ENCODE measurements at regions of chr10 and their contacts with region 1.

Region 1: GRCh38 chr10:43348511-43349312 is 22.7 kb upstream of the FXYD4 start:
- DNase-seq: peak; percentile 69
- H3K4me3 ChIP-seq: no peak overlapping the region
- H3K27ac ChIP-seq: no peak overlapping the region
- H3K4me1 ChIP-seq: peaks cover 5% of the 10 kb centered on the region
- H3K27me3 ChIP-seq: no peaks in the 10 kb centered on the region
- CTCF ChIP-seq: peak; percentile 98 to 99

Region 2: DNA sequence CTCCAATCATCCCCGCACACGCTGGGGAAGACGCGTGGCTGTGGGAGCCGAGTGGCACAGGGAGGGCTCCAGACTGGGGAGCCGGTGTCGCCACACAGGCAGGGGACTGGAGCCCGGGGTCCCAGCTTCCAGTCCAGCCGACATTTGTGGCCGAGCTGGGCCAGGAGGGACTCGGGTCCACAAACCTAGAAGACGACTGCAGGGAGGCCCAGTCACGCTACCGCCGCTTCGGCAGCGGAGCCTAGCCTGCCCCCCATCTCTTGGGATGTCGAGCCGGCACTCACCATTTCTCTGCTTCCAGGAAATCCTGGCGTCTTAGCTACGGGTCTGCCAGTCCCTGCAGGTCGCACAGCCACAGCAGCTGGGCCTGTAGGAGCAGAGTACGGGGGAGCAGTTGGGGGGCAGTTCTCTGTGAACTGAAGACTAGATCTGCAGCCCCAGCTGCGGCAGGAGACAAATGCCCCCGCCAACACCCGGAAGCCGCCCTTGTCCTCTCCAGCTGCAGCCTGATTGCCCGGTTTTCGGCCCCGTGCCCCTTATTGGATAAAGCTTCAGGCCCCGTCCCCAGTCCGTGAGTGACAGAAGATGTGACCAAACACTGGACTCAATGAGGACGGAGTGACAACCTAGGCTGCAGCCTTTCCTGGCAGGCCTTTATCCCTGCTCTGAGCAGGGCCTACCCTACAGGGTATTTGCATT is 981.0 kb before region 1 on chr10:
- CTCF ChIA-PET with region 1: no interaction called
- dilution Hi-C with region 1: no loop called
- in situ Hi-C with region 1: no loop called
- intact Hi-C with region 1: no loop called
- DNase-seq: peak; percentile 94
- H3K4me3 ChIP-seq: peak overlapping the region; percentile 70
- H3K27ac ChIP-seq: peak overlapping the region; percentile 46
- H3K4me1 ChIP-seq: no peaks in the 10 kb centered on the region
- H3K27me3 ChIP-seq: no peaks in the 10 kb centered on the region
- CTCF ChIP-seq: no peak

Region 3: GRCh38 chr10:42866115-42866995 is 482.4 kb before region 1 on chr10:
- CTCF ChIA-PET with region 1: no interaction called
- dilution Hi-C with region 1: no loop called
- in situ Hi-C with region 1: no loop called
- intact Hi-C with region 1: loop called (anchors 2 kb)
- DNase-seq: peak; percentile 57
- H3K4me3 ChIP-seq: peak overlapping the region in 2 of 3 experiments; percentile 32 to 34
- H3K27ac ChIP-seq: no peak overlapping the region
- H3K4me1 ChIP-seq: peaks cover 10% of the 10 kb centered on the region
- H3K27me3 ChIP-seq: no peaks in the 10 kb centered on the region
- CTCF ChIP-seq: peak; percentile 43 to 78

Region 4: GRCh38 chr10:43204943-43205671 is 143.6 kb before region 1 on chr10:
- CTCF ChIA-PET with region 1: no interaction called
- dilution Hi-C with region 1: no loop called
- in situ Hi-C with region 1: no loop called
- intact Hi-C with region 1: loop called (anchors 1 kb)
- DNase-seq: peak; percentile 52
- H3K4me3 ChIP-seq: no peak overlapping the region
- H3K27ac ChIP-seq: no peak overlapping the region
- H3K4me1 ChIP-seq: peaks cover 5% of the 10 kb centered on the region
- H3K27me3 ChIP-seq: no peaks in the 10 kb centered on the region
- CTCF ChIP-seq: peak; percentile 69

Region 5: GRCh38 chr10:43265799-43266721 is 82.7 kb before region 1 on chr10:
- CTCF ChIA-PET with region 1: no interaction called
- dilution Hi-C with region 1: no loop called
- in situ Hi-C with region 1: no loop called
- intact Hi-C with region 1: loop called (anchors 1 kb)
- DNase-seq: peak; percentile 26
- H3K4me3 ChIP-seq: no peak overlapping the region
- H3K27ac ChIP-seq: no peak overlapping the region
- H3K4me1 ChIP-seq: peaks cover 5% of the 10 kb centered on the region
- H3K27me3 ChIP-seq: peaks cover 24% of the 10 kb centered on the region
- CTCF ChIP-seq: peak; percentile 31 to 48

Region 6: DNA sequence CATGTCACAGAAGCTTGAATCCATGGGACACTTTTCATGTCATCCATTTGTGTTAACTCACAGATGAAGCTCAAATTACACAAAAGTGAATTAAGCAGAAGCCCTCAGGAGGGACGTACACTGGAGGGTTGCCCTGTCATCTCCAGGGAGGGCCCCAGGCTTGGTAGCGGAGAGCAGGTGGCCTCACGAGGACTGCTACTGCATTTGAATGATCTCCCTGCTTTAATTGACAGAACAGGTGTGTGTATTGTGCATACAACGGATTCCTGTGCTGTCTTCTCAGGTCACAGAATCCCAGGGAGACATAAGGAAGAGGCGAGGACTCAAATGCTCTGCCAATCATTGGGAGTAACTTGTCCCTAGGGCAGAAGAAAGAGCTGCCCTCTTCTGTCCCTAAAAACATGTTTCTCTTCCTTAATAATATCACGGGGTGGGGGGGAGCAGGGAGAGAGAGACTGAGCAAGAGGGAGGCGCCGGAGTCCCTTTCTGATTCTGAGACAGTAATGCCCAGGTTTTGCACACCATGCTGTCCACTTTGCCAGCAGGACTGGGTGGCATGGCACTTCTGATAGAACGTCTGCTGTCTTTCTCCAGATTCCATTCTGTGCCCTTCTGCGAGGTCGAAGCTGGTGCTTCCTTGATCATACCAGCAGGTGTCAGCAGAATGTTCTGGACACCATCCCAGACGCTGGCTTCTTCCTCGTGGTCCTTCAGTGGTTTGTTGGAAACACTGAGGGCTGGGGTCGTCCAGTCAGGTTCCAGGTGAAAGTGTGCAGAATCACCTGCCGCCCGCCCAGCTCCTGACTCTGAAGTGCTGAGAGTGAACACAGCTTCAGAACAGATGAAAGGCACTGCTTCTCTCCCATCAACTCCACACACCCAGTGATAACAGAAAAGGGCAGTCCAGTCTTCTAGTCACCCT is 55.7 kb before region 1 on chr10:
- CTCF ChIA-PET with region 1: interaction called, 11 read pairs
- dilution Hi-C with region 1: no loop called
- in situ Hi-C with region 1: loop called in 1 of 2 experiments (anchors 10 kb)
- intact Hi-C with region 1: loop called (anchors 1 kb)
- DNase-seq: peak; percentile 20
- H3K4me3 ChIP-seq: no peak overlapping the region
- H3K27ac ChIP-seq: no peak overlapping the region
- H3K4me1 ChIP-seq: peaks cover 1% of the 10 kb centered on the region
- H3K27me3 ChIP-seq: no peaks in the 10 kb centered on the region
- CTCF ChIP-seq: peak; percentile 68 to 79

Region 7: GRCh38 chr10:43308986-43309385 is 39.7 kb before region 1 on chr10:
- CTCF ChIA-PET with region 1: no interaction called
- dilution Hi-C with region 1: no loop called
- in situ Hi-C with region 1: no loop called
- intact Hi-C with region 1: no loop called
- DNase-seq: no peak
- H3K4me3 ChIP-seq: no peak overlapping the region
- H3K27ac ChIP-seq: no peak overlapping the region
- H3K4me1 ChIP-seq: peaks cover 5% of the 10 kb centered on the region
- H3K27me3 ChIP-seq: no peaks in the 10 kb centered on the region
- CTCF ChIP-seq: no peak